Activated naive CD4-positive, alpha-beta T cell treated with anti-CD3 and anti-CD28 coated beads for 36 hours (primary cell): ENCODE measurements at regions of chr4 and their contacts with region 1.

Region 1: DNA sequence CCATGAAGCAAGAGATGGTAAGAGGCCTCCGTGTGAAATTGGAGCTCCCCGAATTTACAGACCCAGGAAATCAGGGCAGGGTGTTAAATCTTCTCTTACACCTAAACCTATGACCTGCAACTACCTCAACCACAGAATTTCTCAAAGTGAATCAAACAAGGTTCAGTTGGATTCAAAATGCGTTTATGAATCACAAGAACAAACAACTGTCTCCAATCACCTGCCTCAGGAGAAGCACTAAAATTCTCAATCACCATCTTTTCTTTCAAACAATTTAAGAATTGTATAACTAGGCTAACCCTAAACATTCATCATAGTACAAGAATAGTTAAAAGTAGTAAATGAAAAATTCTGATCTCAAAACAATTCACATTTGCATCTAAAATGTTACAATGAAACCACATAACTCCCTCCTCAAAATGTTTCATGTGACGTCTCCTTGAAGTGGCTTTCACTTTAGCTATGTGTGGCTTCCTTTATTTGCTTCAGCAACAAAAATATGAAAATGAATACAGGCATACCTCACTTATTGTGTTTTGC is 19.2 kb downstream of the PPP3CA start:
- DNase-seq: peak; percentile 52
- H3K4me3 Mint-ChIP-seq: no peak overlapping the region
- H3K27ac Mint-ChIP-seq: peak overlapping the region; percentile 73
- H3K4me1 Mint-ChIP-seq: peaks cover 28% of the 10 kb centered on the region
- H3K27me3 Mint-ChIP-seq: peaks cover 25% of the 10 kb centered on the region

Region 2: GRCh38 chr4:100823066-100823992 is 504.8 kb before region 1 on chr4:
- CTCF ChIA-PET with region 1: no interaction called
- intact Hi-C with region 1: loop called (anchors 1 kb)
- DNase-seq: peak; percentile 53
- H3K4me3 Mint-ChIP-seq: no peak overlapping the region
- H3K27ac Mint-ChIP-seq: peak overlapping the region; percentile 82
- H3K4me1 Mint-ChIP-seq: peaks cover 9% of the 10 kb centered on the region
- H3K27me3 Mint-ChIP-seq: peaks cover under 1% of the 10 kb centered on the region

Region 3: DNA sequence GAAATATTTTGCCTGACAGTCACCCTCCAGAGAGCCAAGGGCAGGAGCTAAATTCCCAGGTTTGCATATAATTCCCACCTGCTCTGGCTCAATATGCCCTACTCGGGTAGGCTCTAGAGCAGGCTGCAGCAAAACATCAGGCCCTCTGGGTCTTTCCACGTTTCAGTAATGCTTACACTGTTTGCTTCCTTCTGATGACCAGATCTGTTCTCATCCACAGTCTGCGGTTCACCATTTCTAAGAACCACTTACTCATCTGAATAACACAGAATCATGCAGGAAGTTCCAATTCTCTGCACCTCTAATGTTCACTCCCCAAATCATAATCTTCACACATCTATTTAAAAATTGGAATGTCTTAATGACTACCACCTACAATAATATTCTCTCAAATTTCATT is 122.2 kb before region 1 on chr4:
- CTCF ChIA-PET with region 1: no interaction called
- intact Hi-C with region 1: loop called (anchors 1 kb)
- DNase-seq: peak; percentile 60
- H3K4me3 Mint-ChIP-seq: no peak overlapping the region
- H3K27ac Mint-ChIP-seq: no peak overlapping the region
- H3K4me1 Mint-ChIP-seq: peaks cover 24% of the 10 kb centered on the region
- H3K27me3 Mint-ChIP-seq: no peaks in the 10 kb centered on the region

Region 4: GRCh38 chr4:101347557-101348366 is 19.6 kb after region 1 on chr4:
- CTCF ChIA-PET with region 1: interaction called, 4 read pairs
- intact Hi-C with region 1: loop called (anchors 1 kb)
- DNase-seq: peak; percentile 99
- H3K4me3 Mint-ChIP-seq: peak overlapping the region; percentile 95
- H3K27ac Mint-ChIP-seq: peak overlapping the region; percentile 82
- H3K4me1 Mint-ChIP-seq: peaks cover 22% of the 10 kb centered on the region
- H3K27me3 Mint-ChIP-seq: peaks cover 31% of the 10 kb centered on the region

Region 5: DNA sequence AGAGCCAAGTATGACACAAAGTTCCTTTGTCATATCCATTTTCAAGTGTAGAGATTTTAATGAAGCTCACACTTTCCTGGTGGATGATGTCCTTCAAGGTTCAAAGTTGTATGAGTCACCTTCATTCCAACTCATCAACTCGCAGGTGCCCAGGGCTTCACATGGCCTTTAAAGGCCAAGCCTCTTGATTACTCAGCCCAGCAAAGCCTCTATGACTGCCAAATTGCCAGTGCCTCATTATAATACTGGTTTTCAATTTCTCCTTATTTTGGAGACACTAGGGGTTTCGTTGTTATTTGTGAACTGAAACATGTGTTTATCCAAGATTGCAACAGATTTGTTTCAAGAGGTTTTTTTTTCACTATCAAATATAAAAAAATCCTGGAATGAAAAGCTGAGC is 65.1 kb after region 1 on chr4:
- CTCF ChIA-PET with region 1: no interaction called
- intact Hi-C with region 1: no loop called
- DNase-seq: no peak
- H3K4me3 Mint-ChIP-seq: no peak overlapping the region
- H3K27ac Mint-ChIP-seq: no peak overlapping the region
- H3K4me1 Mint-ChIP-seq: no peaks in the 10 kb centered on the region
- H3K27me3 Mint-ChIP-seq: peaks cover 20% of the 10 kb centered on the region

Region 6: GRCh38 chr4:101730291-101731117 is 402.4 kb after region 1 on chr4:
- CTCF ChIA-PET with region 1: no interaction called
- intact Hi-C with region 1: loop called (anchors 5 kb)
- DNase-seq: peak; percentile 76
- H3K4me3 Mint-ChIP-seq: no peak overlapping the region
- H3K27ac Mint-ChIP-seq: no peak overlapping the region
- H3K4me1 Mint-ChIP-seq: no peaks in the 10 kb centered on the region
- H3K27me3 Mint-ChIP-seq: no peaks in the 10 kb centered on the region

Region 7: DNA sequence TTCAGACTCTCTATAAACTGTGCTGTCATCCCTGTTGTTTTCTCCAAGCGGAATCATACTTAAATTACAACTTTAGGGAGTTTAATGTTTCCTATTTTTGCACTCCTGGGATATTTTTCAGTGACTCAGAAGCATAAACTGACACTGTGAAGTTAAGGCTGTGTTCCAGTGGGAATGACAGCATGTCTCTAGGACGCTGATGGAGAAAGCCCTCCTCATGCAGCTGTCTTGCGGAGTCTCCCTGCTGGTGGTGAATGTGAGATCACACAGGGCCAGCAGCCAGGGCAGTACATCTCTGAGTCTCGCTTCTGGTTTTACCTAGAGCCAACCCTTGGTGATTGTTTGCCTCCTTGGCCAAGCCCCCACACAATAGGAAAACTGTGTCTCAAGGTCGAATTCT is 1226.3 kb after region 1 on chr4:
- CTCF ChIA-PET with region 1: no interaction called
- intact Hi-C with region 1: loop called (anchors 10 kb)
- DNase-seq: no peak
- H3K4me3 Mint-ChIP-seq: no peak overlapping the region
- H3K27ac Mint-ChIP-seq: no peak overlapping the region
- H3K4me1 Mint-ChIP-seq: peaks cover 41% of the 10 kb centered on the region
- H3K27me3 Mint-ChIP-seq: no peaks in the 10 kb centered on the region